WTC11 (cell line): ENCODE measurements at regions of chr14 and their contacts with region 1.

Region 1: DNA sequence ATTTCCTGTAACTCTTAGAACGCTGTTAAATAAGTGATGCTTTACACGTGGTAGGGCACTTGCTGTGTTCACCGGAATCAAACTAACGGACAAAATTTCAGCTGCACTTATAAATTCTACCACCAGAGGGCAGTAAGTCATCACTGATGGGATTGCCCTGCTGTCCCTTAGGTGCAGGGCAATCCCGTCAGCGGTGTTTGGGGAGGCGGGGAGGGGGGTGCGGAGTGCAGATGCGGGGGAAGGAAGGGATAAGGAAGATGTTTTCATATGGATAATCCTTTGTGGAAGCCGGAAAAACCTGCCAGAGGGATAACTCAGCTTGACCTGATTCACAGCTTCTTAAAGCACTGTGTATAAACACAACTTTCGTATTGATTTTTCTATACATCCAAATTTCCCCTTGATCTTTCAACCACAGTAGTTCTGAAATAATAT is 21.7 kb upstream of the SLC10A1 start:
- DNase-seq: peak; percentile 60
- ATAC-seq: peak; percentile 87
- H3K4me3 Mint-ChIP-seq: no peak overlapping the region
- H3K27ac Mint-ChIP-seq: no peak overlapping the region
- H3K4me1 Mint-ChIP-seq: peaks cover 2% of the 10 kb centered on the region; the same call in 1 of the 2 replicates
- H3K27me3 Mint-ChIP-seq: no peaks in the 10 kb centered on the region
- CTCF ChIP-seq: peak; percentile 89

Region 2: DNA sequence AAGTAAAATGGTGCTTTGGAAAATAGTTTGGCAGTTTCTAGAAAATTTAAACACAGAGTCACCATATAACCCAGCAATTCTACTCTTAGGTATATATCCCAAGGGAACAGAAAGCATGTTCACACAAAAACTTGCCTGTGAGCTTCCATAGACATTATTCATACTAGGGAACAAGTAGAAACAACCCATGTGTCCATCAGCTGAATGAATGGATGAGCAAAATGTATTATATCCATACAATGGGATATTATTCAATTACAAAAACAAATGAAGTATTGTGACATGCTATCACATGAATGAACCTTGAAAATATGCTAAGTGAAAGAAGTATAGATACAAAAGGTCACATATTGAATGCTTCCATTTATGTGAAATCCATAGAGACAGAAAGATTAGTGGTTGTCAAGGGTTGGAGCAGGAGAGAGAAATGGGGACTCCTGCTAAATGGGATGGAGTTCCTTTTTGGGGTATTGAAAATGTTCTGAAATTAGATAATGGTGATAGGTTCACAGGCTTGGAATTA is 29.6 kb before region 1 on chr14:
- CTCF ChIA-PET with region 1: no interaction called
- POLR2A ChIA-PET with region 1: no interaction called
- DNase-seq: no peak
- ATAC-seq: no peak
- H3K4me3 Mint-ChIP-seq: no peak overlapping the region
- H3K27ac Mint-ChIP-seq: no peak overlapping the region
- H3K4me1 Mint-ChIP-seq: no peaks in the 10 kb centered on the region
- H3K27me3 Mint-ChIP-seq: no peaks in the 10 kb centered on the region
- CTCF ChIP-seq: no peak

Region 3: DNA sequence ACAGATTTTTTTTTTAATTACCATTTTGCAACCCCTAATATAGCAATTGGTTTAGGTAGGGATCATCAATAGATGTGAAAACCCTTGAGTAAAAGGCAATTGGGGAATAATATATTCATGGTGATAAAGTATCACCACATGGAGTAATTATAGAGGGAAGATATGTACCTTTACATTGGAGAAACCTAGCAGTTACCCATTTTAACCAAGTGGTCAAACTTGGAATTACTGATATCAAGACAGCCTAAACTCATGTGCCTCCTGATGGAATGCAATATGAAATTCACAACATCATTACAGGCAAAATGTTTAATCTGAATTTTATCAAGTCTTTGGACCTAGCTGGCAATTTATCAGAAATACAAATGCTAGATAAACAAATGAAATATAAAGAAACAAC is 15.0 kb before region 1 on chr14:
- CTCF ChIA-PET with region 1: no interaction called
- POLR2A ChIA-PET with region 1: no interaction called
- DNase-seq: no peak
- ATAC-seq: no peak
- H3K4me3 Mint-ChIP-seq: no peak overlapping the region
- H3K27ac Mint-ChIP-seq: no peak overlapping the region
- H3K4me1 Mint-ChIP-seq: peaks cover 18% of the 10 kb centered on the region
- H3K27me3 Mint-ChIP-seq: no peaks in the 10 kb centered on the region; the same call in 1 of the 2 replicates
- CTCF ChIP-seq: no peak

Region 4: DNA sequence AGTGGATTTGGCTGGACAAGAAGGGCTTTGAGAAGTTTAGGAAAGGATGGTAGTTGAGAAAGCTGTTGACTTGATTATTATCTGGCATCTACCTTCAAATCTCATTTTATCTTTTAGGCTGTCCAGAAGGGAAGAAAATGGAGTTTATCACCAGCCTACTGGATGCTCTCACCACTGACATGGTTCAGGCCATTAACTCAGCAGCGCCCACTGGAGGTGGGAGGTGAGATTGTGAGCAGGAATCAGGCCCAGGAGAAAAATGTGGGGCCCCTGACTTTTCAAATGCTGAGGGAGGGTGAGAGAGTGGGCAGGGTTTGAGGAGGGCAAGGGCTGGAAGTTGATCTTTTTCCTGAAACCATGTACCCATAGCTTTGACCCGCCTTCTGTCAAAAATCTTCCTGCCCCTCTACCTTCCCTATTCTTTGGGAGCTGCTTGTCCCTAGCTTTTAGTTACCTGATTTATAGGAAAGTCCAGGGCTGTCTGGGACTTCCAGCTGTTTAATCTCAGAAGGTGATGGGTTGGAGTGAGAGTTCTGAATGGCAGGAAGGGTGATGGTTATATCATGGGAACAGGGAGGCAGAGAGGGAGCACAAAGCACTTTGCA is 194.6 kb after region 1 on chr14:
- CTCF ChIA-PET with region 1: interaction called, 10 read pairs
- POLR2A ChIA-PET with region 1: no interaction called
- DNase-seq: peak; percentile 83
- ATAC-seq: peak; percentile 92
- H3K4me3 Mint-ChIP-seq: no peak overlapping the region
- H3K27ac Mint-ChIP-seq: no peak overlapping the region
- H3K4me1 Mint-ChIP-seq: peaks cover 20% of the 10 kb centered on the region
- H3K27me3 Mint-ChIP-seq: no peaks in the 10 kb centered on the region
- CTCF ChIP-seq: peak; percentile 81